Right ventricle myocardium inferior (tissue), 1 donor: ENCODE measurements at regions of chr6 and their contacts with region 1.

Region 1: GRCh38 chr6:150004783-150005717 is 20.3 kb downstream of the RAET1L start:
- DNase-seq: peak; percentile 94
- ATAC-seq: peak; percentile 99

Region 2: GRCh38 chr6:149545754-149546528 is 459.1 kb before region 1 on chr6 and contains the start of gene PPIL4:
- intact Hi-C with region 1: loop called (anchors 5 kb)
- DNase-seq: peak; percentile 99
- ATAC-seq: peak; percentile 98
- total RNA-seq, gene PPIL4: 15.3 TPM